Activated B cell treated with CpG ODN at 0.5 μM for 24 hours (primary cell): ENCODE measurements at regions of chr12 and their contacts with region 1.

Region 1: GRCh38 chr12:68745904-68746571 is at the start of gene SLC35E3:
- DNase-seq: peak; percentile 88
- ATAC-seq: peak; percentile 96
- H3K4me3 Mint-ChIP-seq: peak within 1 kb of the TSS; percentile 98
- H3K27ac Mint-ChIP-seq: peak within 1 kb of the TSS; percentile 95
- H3K4me1 Mint-ChIP-seq: peaks cover 50% of the 10 kb centered on the region
- H3K27me3 Mint-ChIP-seq: no peaks in the 10 kb centered on the region
- CTCF ChIP-seq: no peak
- total RNA-seq, gene SLC35E3: 7.8 and 9.5 TPM in 2 replicates

Region 2: GRCh38 chr12:68223083-68223747 is 522.8 kb before region 1 on chr12:
- CTCF ChIA-PET with region 1: no interaction called
- POLR2A ChIA-PET with region 1: no interaction called
- intact Hi-C with region 1: loop called (anchors 1 kb)
- DNase-seq: peak; percentile 29
- ATAC-seq: peak; percentile 99
- H3K4me3 Mint-ChIP-seq: peak overlapping the region; percentile 48
- H3K27ac Mint-ChIP-seq: no peak overlapping the region
- H3K4me1 Mint-ChIP-seq: peaks cover 5% of the 10 kb centered on the region
- H3K27me3 Mint-ChIP-seq: peaks cover 3% of the 10 kb centered on the region
- CTCF ChIP-seq: no peak

Region 3: DNA sequence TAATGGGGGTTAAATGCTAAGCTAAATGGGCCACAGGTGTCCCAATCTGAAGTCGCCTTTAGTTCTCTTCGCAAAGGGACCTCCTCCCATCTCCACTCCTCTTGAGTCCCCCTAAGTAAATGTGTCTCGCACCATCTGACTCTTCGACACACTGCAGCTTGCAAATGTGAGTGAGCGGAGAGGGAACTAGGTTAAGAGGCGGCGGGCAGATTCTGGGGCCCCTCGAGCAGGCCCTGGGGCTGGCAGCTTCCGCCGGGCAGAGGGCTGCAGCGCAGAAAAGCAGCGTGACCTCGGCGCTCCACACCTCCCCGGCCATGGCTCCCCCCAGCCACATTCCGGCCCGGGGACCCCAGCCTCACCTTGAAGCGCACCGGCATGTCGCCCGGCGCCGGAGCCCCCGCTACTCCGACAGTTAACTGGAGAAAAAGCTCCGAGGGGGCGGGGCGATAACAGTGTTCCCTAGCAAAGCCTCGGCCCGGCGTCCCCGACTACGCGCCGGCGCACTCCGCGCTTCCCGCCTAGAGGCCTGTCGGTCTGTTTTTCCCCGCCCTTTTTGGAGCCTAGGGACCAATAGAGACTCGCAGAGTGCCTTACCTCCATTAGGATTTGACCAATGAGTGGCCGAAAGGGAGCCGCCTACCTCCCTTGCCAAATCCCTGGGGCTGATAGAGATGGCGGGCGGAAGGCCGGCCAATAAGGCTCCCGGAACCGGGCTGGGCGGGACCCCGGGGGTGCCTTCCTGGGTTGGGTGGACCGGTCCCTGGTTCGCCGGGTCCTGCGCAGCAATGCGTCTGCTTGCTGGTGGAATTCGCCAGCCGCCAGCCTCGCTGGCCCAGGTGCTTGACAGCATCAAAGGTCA is 413.9 kb before region 1 on chr12 and contains the start of gene MDM1:
- CTCF ChIA-PET with region 1: no interaction called
- POLR2A ChIA-PET with region 1: interaction called, 6 read pairs
- intact Hi-C with region 1: loop called (anchors 1 kb)
- DNase-seq: peak; percentile 92
- ATAC-seq: peak; percentile 97
- H3K4me3 Mint-ChIP-seq: peak within 1 kb of the TSS; percentile 89
- H3K27ac Mint-ChIP-seq: peak within 1 kb of the TSS; percentile 87
- H3K4me1 Mint-ChIP-seq: peaks cover 27% of the 10 kb centered on the region
- H3K27me3 Mint-ChIP-seq: no peaks in the 10 kb centered on the region
- CTCF ChIP-seq: no peak
- total RNA-seq, gene MDM1: 24.5 and 25.9 TPM in 2 replicates

Region 4: GRCh38 chr12:68772714-68773113 is 26.7 kb after region 1 on chr12:
- CTCF ChIA-PET with region 1: no interaction called
- POLR2A ChIA-PET with region 1: no interaction called
- intact Hi-C with region 1: loop called (anchors 2 kb)
- DNase-seq: no peak
- ATAC-seq: peak; percentile 40
- H3K4me3 Mint-ChIP-seq: peak overlapping the region; percentile 72
- H3K27ac Mint-ChIP-seq: peak overlapping the region; percentile 86
- H3K4me1 Mint-ChIP-seq: peaks cover 29% of the 10 kb centered on the region
- H3K27me3 Mint-ChIP-seq: no peaks in the 10 kb centered on the region
- CTCF ChIP-seq: no peak

Region 5: DNA sequence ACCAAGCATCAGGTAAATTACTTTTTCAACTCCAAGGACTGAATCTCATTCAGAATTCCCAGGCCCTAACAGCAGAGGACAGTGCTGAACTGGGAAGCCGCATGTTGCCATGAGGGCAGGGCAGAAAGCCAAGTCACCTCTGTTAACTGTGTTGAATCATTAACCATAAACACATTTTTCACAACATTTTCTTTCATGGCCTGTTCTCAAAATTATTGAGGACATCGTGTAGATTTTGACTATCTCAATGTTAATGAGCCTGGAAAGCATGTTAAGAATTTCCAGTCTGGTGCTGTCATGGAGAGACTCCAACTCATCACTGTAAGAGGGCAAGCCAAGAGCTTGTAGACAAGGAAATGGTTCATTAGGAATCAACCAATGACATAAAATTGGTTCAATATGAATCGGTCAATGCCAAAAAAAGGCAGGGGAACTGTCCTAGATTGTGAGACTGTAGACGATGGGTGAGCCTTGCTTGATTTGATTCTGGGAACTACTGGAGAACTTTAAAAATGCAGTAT is 153.3 kb after region 1 on chr12:
- CTCF ChIA-PET with region 1: no interaction called
- POLR2A ChIA-PET with region 1: no interaction called
- intact Hi-C with region 1: no loop called
- DNase-seq: no peak
- ATAC-seq: no peak
- H3K4me3 Mint-ChIP-seq: no peak overlapping the region
- H3K27ac Mint-ChIP-seq: no peak overlapping the region
- H3K4me1 Mint-ChIP-seq: peaks cover 57% of the 10 kb centered on the region
- H3K27me3 Mint-ChIP-seq: no peaks in the 10 kb centered on the region
- CTCF ChIP-seq: no peak

Region 6: GRCh38 chr12:69239352-69239921 is 493.4 kb after region 1 on chr12 and contains the start of gene CPSF6:
- CTCF ChIA-PET with region 1: no interaction called
- POLR2A ChIA-PET with region 1: no interaction called
- intact Hi-C with region 1: loop called (anchors 1 kb)
- DNase-seq: peak; percentile 96
- ATAC-seq: peak; percentile 93
- H3K4me3 Mint-ChIP-seq: peak within 1 kb of the TSS; percentile 99
- H3K27ac Mint-ChIP-seq: peak within 1 kb of the TSS; percentile 96
- H3K4me1 Mint-ChIP-seq: peaks cover 51% of the 10 kb centered on the region
- H3K27me3 Mint-ChIP-seq: no peaks in the 10 kb centered on the region
- CTCF ChIP-seq: no peak
- total RNA-seq, gene CPSF6: 95.5 and 104 TPM in 2 replicates